ENCODE measurements at regions of chr16 and their contacts with region 1.

Region 1: GRCh38 chr16:14300705-14301168 is 229.6 kb downstream of the MRTFB start:
- DNase-seq: peak in 6 of 9 donors; percentile 24 to 58 (median 52)
- ATAC-seq: peak; percentile 58
- H3K4me3 ChIP-seq: no peak overlapping the region
- H3K4me3 Mint-ChIP-seq: peak overlapping the region; percentile 83 to 91 (median 88)
- H3K27ac ChIP-seq: peak overlapping the region; percentile 45
- H3K27ac Mint-ChIP-seq: peak overlapping the region; percentile 23 to 88 (median 69)
- H3K4me1 ChIP-seq: peaks cover 7 to 8% of the 10 kb centered on the region in 2 donors
- H3K4me1 Mint-ChIP-seq: peaks cover 7 to 29% (median 25%) of the 10 kb centered on the region in 7 donors
- H3K27me3 ChIP-seq: no peaks in the 10 kb centered on the region
- H3K27me3 Mint-ChIP-seq: peaks cover 0 to 38% (median 0%) of the 10 kb centered on the region in 5 donors

Region 2: DNA sequence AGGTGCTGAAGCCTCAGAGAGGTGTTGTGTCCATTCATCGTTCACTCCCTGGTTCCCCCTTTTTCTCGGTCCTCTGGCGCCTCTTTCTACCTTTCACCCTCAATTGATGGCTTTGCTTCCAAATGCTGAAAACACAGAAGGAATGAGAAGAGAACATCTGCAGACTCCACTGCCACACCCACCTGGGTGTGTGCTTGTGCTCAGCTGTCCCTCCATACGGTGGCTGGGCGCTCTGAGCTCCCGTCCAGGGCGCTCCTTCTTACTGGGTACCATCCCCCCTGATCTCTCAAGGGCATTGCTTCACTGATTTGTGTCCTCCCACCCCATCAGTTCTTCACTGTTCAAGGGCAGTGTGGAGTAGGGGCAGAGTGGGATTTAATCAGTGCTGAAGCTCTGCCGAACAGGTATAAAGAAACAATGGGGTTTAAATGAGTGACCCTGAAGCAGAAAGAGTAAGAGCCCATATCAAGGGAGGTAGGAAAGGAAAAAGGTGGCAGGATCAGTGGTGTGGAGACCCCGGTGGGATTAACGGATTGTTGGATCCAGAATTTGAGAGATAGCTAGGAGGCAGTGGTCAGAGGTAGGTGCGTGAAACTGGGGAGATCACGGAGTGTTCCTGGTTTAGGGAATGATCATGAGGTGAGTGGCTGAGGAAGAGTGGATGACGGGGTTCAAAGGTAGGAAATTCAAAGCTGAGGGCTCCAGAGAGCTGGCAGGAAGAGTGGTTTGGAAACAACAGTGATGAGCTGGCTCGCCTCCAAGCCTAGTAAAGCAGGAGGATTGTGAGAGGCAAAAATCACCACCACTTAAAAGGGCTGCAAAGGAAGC is 188.8 kb before region 1 on chr16:
- CTCF ChIA-PET with region 1: no interaction called
- POLR2A ChIA-PET with region 1: no interaction called
- intact Hi-C with region 1: no loop called
- DNase-seq: peak in 2 of 9 donors; percentile 4 to 7
- ATAC-seq: no peak
- H3K4me3 ChIP-seq: no peak overlapping the region
- H3K4me3 Mint-ChIP-seq: peak overlapping the region in 4 of 10 donors; percentile 1 to 56 (median 4)
- H3K27ac ChIP-seq: no peak overlapping the region
- H3K27ac Mint-ChIP-seq: peak overlapping the region in 3 of 9 donors; percentile 4 to 73 (median 35)
- H3K4me1 ChIP-seq: peaks cover 0 to 16% of the 10 kb centered on the region in 2 donors
- H3K4me1 Mint-ChIP-seq: peaks cover 0 to 72% (median 57%) of the 10 kb centered on the region in 7 donors
- H3K27me3 ChIP-seq: no peaks in the 10 kb centered on the region
- H3K27me3 Mint-ChIP-seq: no peaks in the 10 kb centered on the region

Region 3: GRCh38 chr16:14285513-14286385 is 15.0 kb before region 1 on chr16:
- CTCF ChIA-PET with region 1: interaction called, 3 read pairs
- POLR2A ChIA-PET with region 1: interaction called, 8 read pairs
- intact Hi-C with region 1: loop called (anchors 1 kb)
- DNase-seq: peak; percentile 89 to 99 (median 97)
- ATAC-seq: peak; percentile 90
- H3K4me3 ChIP-seq: peak overlapping the region; percentile 67
- H3K4me3 Mint-ChIP-seq: peak overlapping the region; percentile 84 to 96 (median 94)
- H3K27ac ChIP-seq: peak overlapping the region; percentile 69
- H3K27ac Mint-ChIP-seq: peak overlapping the region; percentile 85 to 97 (median 95)
- H3K4me1 ChIP-seq: peaks cover 0 to 3% of the 10 kb centered on the region in 2 donors
- H3K4me1 Mint-ChIP-seq: peaks cover 2 to 32% (median 19%) of the 10 kb centered on the region in 7 donors
- H3K27me3 ChIP-seq: no peaks in the 10 kb centered on the region
- H3K27me3 Mint-ChIP-seq: peaks cover 0 to 3% (median 0%) of the 10 kb centered on the region in 5 donors

Region 4: DNA sequence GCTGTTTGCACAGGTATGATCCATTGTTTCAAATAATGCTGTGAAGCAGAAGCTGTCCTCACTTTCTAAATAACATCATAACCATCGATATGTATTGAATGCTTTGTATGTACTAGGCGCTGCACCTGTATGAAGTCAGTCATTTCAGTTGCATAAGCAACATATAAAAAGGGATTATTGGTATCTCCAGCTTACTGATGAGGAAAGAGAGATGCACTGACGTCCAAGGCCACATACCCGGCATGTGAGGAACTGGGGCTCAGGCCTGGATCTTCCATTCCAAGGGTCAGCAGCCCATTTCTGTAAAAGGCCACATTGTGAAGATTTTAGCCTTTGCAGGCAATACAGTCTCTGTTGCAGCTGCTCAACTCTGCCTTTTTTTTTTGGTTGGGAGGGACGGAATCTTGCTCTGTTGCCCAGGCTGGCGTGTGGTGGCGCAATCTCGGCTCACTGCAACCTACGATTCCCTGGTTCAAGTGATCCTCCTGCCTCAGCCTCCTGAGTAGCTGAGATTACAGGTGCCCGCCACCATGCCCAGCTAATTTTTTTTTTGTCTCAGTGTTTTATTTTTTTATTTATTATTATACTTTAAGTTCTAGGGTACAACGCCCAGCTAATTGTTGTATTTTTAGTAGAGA is 15.1 kb after region 1 on chr16:
- CTCF ChIA-PET with region 1: no interaction called
- POLR2A ChIA-PET with region 1: no interaction called
- intact Hi-C with region 1: no loop called
- DNase-seq: no peak
- ATAC-seq: no peak
- H3K4me3 ChIP-seq: no peak overlapping the region
- H3K4me3 Mint-ChIP-seq: no peak overlapping the region
- H3K27ac ChIP-seq: no peak overlapping the region
- H3K27ac Mint-ChIP-seq: peak overlapping the region in 2 of 9 donors; percentile 46 to 51
- H3K4me1 ChIP-seq: no peaks in the 10 kb centered on the region
- H3K4me1 Mint-ChIP-seq: peaks cover 0 to 6% (median 0%) of the 10 kb centered on the region in 7 donors
- H3K27me3 ChIP-seq: no peaks in the 10 kb centered on the region
- H3K27me3 Mint-ChIP-seq: no peaks in the 10 kb centered on the region

Region 5: DNA sequence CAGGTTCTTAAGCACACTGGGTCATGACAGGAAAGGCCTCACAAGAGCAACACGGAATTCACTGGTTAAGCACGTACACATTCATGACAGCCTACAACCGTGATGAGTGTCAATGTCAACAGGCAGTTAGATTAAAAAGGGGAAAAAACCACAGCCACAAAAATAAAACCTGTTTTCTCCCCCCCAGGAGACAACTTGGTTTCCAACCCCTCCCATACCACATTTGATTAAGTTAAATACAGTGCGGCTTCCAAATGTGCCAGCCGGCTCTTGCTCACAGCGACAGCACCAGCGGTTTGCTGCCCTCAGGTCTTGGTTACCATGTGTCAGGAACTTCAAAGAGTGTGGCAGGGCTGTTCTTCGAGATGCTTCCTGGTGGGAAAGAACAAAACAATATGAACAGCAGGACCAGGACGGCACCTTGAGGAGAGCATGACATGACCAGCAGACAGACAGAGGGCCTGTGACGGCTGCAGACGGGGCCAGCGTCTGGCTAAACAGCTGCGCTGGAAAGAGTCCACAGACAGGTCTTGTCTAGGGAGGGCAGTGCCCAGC is 135.7 kb after region 1 on chr16:
- CTCF ChIA-PET with region 1: interaction called, 3 read pairs
- POLR2A ChIA-PET with region 1: no interaction called
- intact Hi-C with region 1: loop called in 1 of 2 experiments (anchors 2 kb)
- DNase-seq: peak in 6 of 9 donors; percentile 35 to 65 (median 46)
- ATAC-seq: peak; percentile 70
- H3K4me3 ChIP-seq: no peak overlapping the region
- H3K4me3 Mint-ChIP-seq: peak overlapping the region; percentile 60 to 82 (median 74)
- H3K27ac ChIP-seq: peak overlapping the region; percentile 57
- H3K27ac Mint-ChIP-seq: peak overlapping the region in 8 of 9 donors; percentile 77 to 94 (median 90)
- H3K4me1 ChIP-seq: peaks cover 12 to 17% of the 10 kb centered on the region in 2 donors
- H3K4me1 Mint-ChIP-seq: peaks cover 13 to 50% (median 45%) of the 10 kb centered on the region in 7 donors
- H3K27me3 ChIP-seq: no peaks in the 10 kb centered on the region
- H3K27me3 Mint-ChIP-seq: no peaks in the 10 kb centered on the region

Region 6: DNA sequence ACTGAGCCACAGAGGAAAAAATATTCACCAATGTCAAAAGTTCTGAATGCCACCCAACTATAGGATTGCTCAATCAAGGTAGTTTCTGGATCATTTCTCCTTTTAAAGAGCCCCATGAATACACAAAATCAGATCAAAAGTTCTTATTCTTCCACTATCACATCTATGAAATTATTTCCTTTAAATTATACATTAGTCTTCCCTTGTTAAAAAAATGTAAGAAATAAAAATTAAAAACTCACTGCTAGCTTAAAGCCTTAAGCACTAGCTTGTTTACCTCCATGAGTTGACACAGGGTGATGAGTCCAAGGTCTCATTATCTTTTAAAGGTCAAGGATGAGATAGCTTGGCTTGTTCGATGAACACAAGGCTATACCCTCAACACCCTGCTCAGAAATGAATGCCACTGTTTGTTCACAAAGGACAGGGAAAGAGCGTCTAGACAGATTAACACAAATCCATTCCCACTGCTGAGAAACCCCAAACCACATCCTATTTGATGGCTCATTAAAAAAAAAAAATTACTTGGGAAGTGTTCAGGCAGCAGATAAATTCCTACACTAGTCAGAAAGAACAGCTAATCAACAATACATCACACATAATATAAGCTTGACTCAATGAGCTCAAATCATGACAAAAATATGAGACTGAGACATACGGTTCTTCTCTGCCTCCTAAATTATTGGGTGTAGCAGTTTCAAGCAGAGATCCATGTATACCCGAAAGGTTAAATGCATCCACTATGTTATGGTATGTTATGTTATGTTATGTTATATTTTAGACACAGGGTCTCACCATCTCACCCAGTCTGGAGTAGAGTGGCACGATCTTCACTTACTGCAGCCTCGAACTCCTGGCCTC is 210.4 kb after region 1 on chr16:
- CTCF ChIA-PET with region 1: no interaction called
- POLR2A ChIA-PET with region 1: no interaction called
- intact Hi-C with region 1: no loop called
- DNase-seq: no peak
- ATAC-seq: no peak
- H3K4me3 ChIP-seq: no peak overlapping the region
- H3K4me3 Mint-ChIP-seq: no peak overlapping the region
- H3K27ac ChIP-seq: no peak overlapping the region
- H3K27ac Mint-ChIP-seq: peak overlapping the region in 2 of 9 donors; percentile 42 to 43
- H3K4me1 ChIP-seq: no peaks in the 10 kb centered on the region
- H3K4me1 Mint-ChIP-seq: peaks cover 0 to 25% (median 11%) of the 10 kb centered on the region in 7 donors
- H3K27me3 ChIP-seq: no peaks in the 10 kb centered on the region
- H3K27me3 Mint-ChIP-seq: no peaks in the 10 kb centered on the region

Region 7: GRCh38 chr16:14529010-14529669 is 228.4 kb after region 1 on chr16:
- CTCF ChIA-PET with region 1: interaction called, 12 read pairs
- POLR2A ChIA-PET with region 1: no interaction called
- intact Hi-C with region 1: loop called (anchors 1 kb)
- DNase-seq: peak; percentile 15 to 72 (median 59)
- ATAC-seq: peak; percentile 73
- H3K4me3 ChIP-seq: no peak overlapping the region
- H3K4me3 Mint-ChIP-seq: no peak overlapping the region
- H3K27ac ChIP-seq: no peak overlapping the region
- H3K27ac Mint-ChIP-seq: peak overlapping the region in 1 of 9 donors; percentile 9
- H3K4me1 ChIP-seq: no peaks in the 10 kb centered on the region
- H3K4me1 Mint-ChIP-seq: peaks cover 0 to 12% (median 4%) of the 10 kb centered on the region in 7 donors
- H3K27me3 ChIP-seq: no peaks in the 10 kb centered on the region
- H3K27me3 Mint-ChIP-seq: no peaks in the 10 kb centered on the region

Region 8: DNA sequence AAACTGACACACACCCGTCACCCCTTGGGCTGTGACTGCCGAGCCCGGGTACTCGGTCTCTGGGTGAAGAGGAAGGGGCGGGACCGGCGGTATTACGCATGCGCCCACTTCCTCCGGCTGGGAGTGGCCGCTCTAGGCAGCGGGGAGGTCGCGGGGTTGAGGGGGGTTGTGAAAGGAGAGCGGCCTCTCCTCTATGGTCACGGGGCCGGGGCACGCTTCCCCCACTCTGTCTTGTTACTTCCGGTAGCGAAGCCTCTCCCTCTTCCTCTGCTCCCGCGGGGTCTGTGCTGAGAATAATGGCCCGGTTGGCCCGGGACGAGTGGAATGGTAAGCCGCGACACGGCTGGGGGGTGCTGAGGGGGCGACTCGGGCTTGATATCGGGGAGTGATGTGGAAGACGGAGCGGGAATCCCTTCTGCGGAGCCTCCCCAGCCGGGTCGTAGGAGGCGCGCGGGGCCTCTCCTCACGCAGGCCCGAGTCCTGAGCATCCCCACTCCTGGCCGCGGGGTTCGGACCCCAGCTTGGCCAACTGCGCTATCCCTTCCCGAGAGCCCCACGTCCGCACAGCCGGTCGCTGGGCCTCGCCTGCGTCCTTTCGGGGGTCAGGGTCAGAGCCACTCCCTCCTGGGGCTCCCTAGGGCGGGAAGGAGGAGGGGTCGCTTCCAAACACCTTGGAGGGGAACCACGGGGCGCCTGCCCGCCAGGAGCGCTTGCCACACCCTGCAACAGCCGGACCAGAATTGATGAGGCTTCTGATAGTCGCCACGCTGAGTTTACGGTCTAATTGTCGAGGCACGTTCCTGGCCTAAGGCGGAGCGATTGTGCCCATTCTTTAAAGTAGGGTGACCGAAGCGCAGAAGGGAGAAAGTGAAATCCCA is 332.2 kb after region 1 on chr16 and contains the start of gene BFAR:
- CTCF ChIA-PET with region 1: no interaction called
- POLR2A ChIA-PET with region 1: no interaction called
- intact Hi-C with region 1: loop called (anchors 1 to 5 kb)
- DNase-seq: peak; percentile 95 to 99 (median 99)
- ATAC-seq: peak; percentile 85
- H3K4me3 ChIP-seq: peak within 1 kb of the TSS; percentile 89
- H3K4me3 Mint-ChIP-seq: peak within 1 kb of the TSS; percentile 92 to 100 (median 100)
- H3K27ac ChIP-seq: peak within 1 kb of the TSS; percentile 93
- H3K27ac Mint-ChIP-seq: peak within 1 kb of the TSS; percentile 94 to 100 (median 99)
- H3K4me1 ChIP-seq: peaks cover 38 to 45% of the 10 kb centered on the region in 2 donors
- H3K4me1 Mint-ChIP-seq: peaks cover 32 to 76% (median 68%) of the 10 kb centered on the region in 7 donors
- H3K27me3 ChIP-seq: no peaks in the 10 kb centered on the region
- H3K27me3 Mint-ChIP-seq: no peaks in the 10 kb centered on the region
- total RNA-seq, gene BFAR: 43.9 to 82.0 (median 66.0) TPM

Measured in naive thymus-derived CD4-positive, alpha-beta T cell (primary cell).